Lower leg skin (tissue), 4 donors: ENCODE measurements at regions of chr18 and their contacts with region 1.

Region 1: DNA sequence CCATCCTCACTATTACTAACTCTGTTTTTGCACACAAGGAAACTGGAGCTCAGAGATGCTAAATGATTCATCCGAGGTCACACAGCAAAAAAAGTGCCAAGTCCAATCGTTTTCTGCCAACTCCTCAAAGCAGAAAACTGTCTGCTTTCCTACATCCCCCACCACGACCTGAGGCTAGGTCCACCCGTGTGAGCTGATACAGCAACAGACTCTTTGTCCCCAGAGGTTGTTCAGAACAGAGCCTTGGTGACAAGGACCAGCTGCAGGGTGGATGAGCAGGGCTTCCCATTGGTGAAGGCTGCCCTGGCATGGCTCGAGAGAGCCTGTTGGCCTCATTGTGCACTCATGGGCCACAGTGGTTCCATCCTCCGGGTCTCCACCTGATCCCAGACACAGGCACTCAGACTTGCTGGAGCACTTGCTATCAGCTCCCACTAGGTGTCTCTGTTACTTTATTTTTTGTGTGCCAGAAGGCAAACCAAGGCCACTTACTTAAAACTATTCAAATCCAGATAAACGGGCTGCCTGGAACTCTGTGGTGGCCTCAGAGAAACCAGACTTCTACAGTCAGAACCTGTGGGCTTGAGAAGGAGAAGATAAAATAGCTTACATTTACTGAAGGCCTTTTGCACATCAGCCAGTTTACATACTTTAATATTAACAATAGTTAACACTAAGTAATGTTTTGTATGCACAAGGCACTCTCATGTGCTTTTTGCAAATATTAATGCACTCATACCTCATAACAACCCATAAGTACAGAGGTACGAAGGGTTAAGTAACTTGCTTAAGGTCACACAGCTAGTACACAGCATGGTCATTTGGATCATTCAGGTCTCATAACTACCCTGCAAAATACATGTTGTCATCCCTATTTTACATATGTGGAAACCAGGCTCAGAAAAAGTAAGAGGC is 62.9 kb upstream of the CTIF start:
- DNase-seq: peak in 1 of 2 donors; percentile 53
- H3K4me3 ChIP-seq: no peak overlapping the region
- CTCF ChIP-seq: peak in 1 of 3 donors; percentile 56
- POLR2A ChIP-seq: no peak

Region 2: GRCh38 chr18:48663931-48664847 is 188.3 kb after region 1 on chr18:
- intact Hi-C with region 1: loop called (anchors 5 kb)
- DNase-seq: peak; percentile 36 to 94
- H3K4me3 ChIP-seq: no peak overlapping the region
- CTCF ChIP-seq: peak in 1 of 3 donors; percentile 37
- POLR2A ChIP-seq: no peak